Activated CD4-positive, alpha-beta memory T cell treated with anti-CD3 and anti-CD28 coated beads for 36 hours (primary cell): ENCODE measurements at regions of chr2 and their contacts with region 1.

Region 1: DNA sequence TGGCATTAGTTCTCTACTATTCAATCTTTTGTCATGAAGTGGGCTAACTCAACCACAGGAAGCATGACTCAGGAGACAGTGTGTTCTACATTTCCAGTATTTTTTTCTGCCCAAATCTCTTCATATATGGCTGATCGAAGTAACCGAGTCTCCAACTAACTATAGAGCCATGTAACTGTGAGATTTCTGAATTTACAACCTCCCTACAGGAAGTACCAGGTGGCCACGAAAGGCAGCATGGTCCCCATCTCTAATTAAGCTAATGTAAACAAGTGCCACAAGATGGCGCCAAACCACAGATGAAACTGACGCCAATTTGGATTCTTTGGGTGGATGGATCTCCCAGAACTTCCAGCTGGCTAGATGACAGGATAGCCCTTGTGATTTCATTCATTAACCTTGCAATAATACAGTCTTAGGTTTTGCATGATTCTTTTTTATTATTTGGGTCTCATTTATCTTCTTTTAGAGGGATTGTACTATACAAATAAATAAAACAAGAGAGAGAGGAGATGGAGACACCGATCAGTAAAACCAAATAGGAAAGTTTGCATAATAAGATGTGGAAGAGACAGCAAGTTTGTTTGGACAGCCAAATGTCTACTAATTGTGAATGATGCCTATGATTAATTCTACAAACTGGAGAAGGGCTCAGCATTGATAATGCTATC is 18.3 kb upstream of the ARHGAP15 start:
- DNase-seq: peak; percentile 70
- H3K4me3 Mint-ChIP-seq: peak overlapping the region; percentile 56
- H3K27ac Mint-ChIP-seq: peak overlapping the region; percentile 86
- H3K4me1 Mint-ChIP-seq: peaks cover 31% of the 10 kb centered on the region
- H3K27me3 Mint-ChIP-seq: no peaks in the 10 kb centered on the region

Region 2: GRCh38 chr2:142980561-142981378 is 130.1 kb before region 1 on chr2:
- CTCF ChIA-PET with region 1: no interaction called
- POLR2A ChIA-PET with region 1: no interaction called
- intact Hi-C with region 1: no loop called
- DNase-seq: peak; percentile 13
- H3K4me3 Mint-ChIP-seq: no peak overlapping the region
- H3K27ac Mint-ChIP-seq: no peak overlapping the region
- H3K4me1 Mint-ChIP-seq: no peaks in the 10 kb centered on the region
- H3K27me3 Mint-ChIP-seq: peaks cover 1% of the 10 kb centered on the region

Region 3: GRCh38 chr2:143068509-143068908 is 42.4 kb before region 1 on chr2:
- CTCF ChIA-PET with region 1: no interaction called
- POLR2A ChIA-PET with region 1: no interaction called
- intact Hi-C with region 1: no loop called
- DNase-seq: no peak
- H3K4me3 Mint-ChIP-seq: no peak overlapping the region
- H3K27ac Mint-ChIP-seq: no peak overlapping the region
- H3K4me1 Mint-ChIP-seq: peaks cover 5% of the 10 kb centered on the region
- H3K27me3 Mint-ChIP-seq: no peaks in the 10 kb centered on the region

Region 4: DNA sequence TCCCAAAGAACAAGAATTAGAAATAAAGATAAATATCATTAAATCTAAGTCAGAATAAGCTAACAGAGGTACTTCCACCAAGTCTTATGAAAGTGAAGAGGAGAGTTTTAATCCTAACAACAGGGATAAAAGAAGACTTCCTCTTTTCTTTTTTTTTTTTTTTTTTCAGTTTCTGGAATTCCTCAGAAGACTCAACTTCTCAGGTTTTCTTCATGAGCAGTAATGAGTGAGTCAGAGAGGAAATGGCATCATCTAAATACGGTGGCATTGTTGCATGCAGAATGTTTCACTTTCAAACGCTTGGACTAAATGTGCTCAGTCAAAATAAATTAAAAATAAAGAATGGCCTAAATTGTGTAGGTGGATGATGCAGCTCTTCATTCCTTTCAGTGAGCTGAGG is 27.3 kb before region 1 on chr2:
- CTCF ChIA-PET with region 1: interaction called, 10 read pairs
- POLR2A ChIA-PET with region 1: no interaction called
- intact Hi-C with region 1: loop called (anchors 2 kb)
- DNase-seq: no peak
- H3K4me3 Mint-ChIP-seq: no peak overlapping the region
- H3K27ac Mint-ChIP-seq: peak overlapping the region; percentile 11
- H3K4me1 Mint-ChIP-seq: peaks cover 29% of the 10 kb centered on the region
- H3K27me3 Mint-ChIP-seq: no peaks in the 10 kb centered on the region

Region 5: DNA sequence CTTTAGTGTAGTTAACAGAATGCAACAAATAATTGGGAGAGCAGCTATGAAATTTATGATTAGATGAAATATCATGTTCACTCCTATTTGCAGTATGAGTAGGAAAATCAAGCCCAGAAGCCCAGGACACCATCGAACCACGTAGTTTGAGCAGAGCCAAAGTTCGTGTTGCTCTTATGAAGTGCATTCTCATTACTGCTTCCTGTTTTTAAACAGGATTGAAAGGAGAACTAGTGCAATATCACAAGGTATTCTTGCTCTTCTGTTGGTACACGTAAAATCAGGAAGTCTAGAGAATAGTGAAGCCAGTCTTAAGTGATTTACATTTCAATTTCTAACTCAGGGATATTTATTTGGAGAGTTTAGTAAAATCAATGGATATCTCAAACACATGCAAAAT is 39.4 kb after region 1 on chr2:
- CTCF ChIA-PET with region 1: interaction called, 9 read pairs
- POLR2A ChIA-PET with region 1: no interaction called
- intact Hi-C with region 1: loop called (anchors 2 kb)
- DNase-seq: peak; percentile 27
- H3K4me3 Mint-ChIP-seq: peak overlapping the region; percentile 40
- H3K27ac Mint-ChIP-seq: peak overlapping the region; percentile 72
- H3K4me1 Mint-ChIP-seq: peaks cover 86% of the 10 kb centered on the region
- H3K27me3 Mint-ChIP-seq: no peaks in the 10 kb centered on the region

Region 6: GRCh38 chr2:143217512-143218115 is 106.7 kb after region 1 on chr2:
- CTCF ChIA-PET with region 1: interaction called, 108 read pairs
- POLR2A ChIA-PET with region 1: interaction called, 7 read pairs
- intact Hi-C with region 1: loop called (anchors 1 kb)
- DNase-seq: no peak
- H3K4me3 Mint-ChIP-seq: no peak overlapping the region
- H3K27ac Mint-ChIP-seq: peak overlapping the region; percentile 38
- H3K4me1 Mint-ChIP-seq: peaks cover 38% of the 10 kb centered on the region
- H3K27me3 Mint-ChIP-seq: no peaks in the 10 kb centered on the region

Region 7: DNA sequence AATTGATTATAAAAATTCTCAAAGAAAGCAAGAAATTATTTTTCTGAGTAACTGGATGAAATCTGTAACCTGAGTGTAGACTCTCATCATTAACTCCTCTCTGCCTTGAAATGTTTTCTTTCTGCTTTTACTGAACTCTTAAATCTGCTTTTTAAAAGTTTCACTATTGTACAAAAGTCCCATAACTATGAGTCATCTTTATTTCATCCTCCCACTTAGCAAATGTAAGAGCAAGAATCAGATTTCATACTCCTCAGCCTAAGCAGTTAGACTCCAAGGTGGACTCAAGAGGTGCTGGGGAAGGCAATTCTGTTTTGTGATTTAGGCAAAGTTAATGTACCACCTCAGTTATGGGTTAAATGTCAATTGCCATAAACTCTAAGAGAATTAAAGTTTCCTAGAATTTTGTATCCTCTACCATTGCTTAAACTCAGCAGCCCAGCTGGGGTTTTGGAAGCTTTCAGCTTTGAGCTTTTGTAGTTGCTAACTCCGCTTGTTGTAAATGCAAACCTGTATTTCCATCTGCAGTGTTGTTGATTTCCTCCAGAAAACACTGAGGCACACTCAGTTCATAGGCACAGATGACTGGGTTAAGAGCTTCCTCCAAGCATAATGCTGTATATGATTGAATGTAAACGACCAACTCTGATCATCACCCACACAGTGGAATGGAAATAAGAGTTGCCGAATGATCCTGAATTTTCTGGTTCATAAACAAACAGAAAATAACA is 287.2 kb after region 1 on chr2:
- CTCF ChIA-PET with region 1: no interaction called
- POLR2A ChIA-PET with region 1: no interaction called
- intact Hi-C with region 1: no loop called
- DNase-seq: no peak
- H3K4me3 Mint-ChIP-seq: peak overlapping the region; percentile 24
- H3K27ac Mint-ChIP-seq: peak overlapping the region; percentile 43
- H3K4me1 Mint-ChIP-seq: peaks cover 66% of the 10 kb centered on the region
- H3K27me3 Mint-ChIP-seq: no peaks in the 10 kb centered on the region

Region 8: DNA sequence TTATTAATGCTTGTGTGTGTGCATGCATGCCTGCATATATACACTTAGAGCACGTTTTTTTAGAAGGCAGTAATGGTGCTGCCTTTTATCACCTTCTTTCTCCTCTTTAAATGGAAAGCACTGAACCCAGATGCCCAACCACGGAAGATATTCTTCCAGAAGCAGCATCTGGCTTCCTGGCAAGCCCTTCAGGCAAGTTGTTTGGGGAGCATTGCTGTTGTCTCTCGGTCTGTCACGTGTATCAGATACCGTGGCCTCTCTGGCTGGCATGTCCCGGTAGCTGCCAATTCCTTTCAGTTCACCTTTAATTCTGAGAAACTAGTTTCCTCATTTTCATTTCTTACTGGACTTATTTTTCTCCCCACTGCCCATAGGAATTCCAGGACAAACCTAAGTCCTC is 606.2 kb after region 1 on chr2:
- CTCF ChIA-PET with region 1: no interaction called
- POLR2A ChIA-PET with region 1: no interaction called
- intact Hi-C with region 1: no loop called
- DNase-seq: no peak
- H3K4me3 Mint-ChIP-seq: no peak overlapping the region
- H3K27ac Mint-ChIP-seq: no peak overlapping the region
- H3K4me1 Mint-ChIP-seq: peaks cover 43% of the 10 kb centered on the region
- H3K27me3 Mint-ChIP-seq: no peaks in the 10 kb centered on the region